Sigmoid colon (tissue), 7 donors: ENCODE measurements at regions of chr9 and their contacts with region 1.

Region 1: DNA sequence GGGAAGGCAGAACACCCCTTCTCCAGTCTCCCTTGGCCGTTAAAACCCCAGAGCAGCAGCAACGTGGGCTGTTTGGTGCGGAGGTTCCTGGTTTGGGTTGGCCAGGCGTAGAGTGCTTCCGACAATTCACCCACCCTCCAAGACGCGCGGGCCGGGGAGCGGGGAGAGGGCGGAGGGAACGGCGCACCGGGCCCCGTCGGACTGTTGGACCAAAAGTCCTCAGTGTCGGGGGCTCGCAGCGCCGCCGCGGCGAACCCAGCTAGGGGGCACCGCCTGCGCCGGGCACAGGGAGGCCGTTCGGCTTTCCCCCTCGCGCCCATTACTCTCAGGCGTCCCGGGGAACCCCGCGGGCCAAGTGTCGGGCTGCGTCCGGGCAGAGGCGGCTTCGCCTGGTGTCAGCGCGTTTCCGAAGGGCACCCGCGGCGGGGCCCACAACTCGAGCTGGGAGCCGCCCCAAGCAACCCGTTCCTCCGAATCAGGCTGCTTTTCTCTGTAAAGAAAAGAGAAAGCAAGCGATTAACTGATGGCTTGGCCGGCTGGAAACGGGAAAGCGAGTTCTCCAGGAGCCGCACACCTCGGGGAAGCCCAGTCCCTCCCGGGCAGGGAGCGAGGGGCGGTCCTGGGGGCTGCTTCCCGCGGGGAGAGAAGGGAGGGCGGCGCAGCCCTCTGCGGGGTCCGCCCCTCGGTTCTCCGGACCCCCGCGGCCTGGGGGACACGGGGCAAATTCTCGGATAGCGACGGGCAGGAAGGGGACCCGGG is 145.5 kb downstream of the ERCC6L2 start:
- DNase-seq: no peak
- H3K4me3 ChIP-seq: peak overlapping the region; percentile 47 to 59 (median 54)
- H3K27ac ChIP-seq: peak overlapping the region; percentile 49 to 79 (median 61)
- H3K4me1 ChIP-seq: peaks cover 0 to 27% (median 24%) of the 10 kb centered on the region in 4 donors
- H3K27me3 ChIP-seq: peaks cover 9 to 45% (median 23%) of the 10 kb centered on the region in 3 donors
- CTCF ChIP-seq: no peak
- EP300 ChIP-seq: no peak
- POLR2A ChIP-seq: no peak

Region 2: DNA sequence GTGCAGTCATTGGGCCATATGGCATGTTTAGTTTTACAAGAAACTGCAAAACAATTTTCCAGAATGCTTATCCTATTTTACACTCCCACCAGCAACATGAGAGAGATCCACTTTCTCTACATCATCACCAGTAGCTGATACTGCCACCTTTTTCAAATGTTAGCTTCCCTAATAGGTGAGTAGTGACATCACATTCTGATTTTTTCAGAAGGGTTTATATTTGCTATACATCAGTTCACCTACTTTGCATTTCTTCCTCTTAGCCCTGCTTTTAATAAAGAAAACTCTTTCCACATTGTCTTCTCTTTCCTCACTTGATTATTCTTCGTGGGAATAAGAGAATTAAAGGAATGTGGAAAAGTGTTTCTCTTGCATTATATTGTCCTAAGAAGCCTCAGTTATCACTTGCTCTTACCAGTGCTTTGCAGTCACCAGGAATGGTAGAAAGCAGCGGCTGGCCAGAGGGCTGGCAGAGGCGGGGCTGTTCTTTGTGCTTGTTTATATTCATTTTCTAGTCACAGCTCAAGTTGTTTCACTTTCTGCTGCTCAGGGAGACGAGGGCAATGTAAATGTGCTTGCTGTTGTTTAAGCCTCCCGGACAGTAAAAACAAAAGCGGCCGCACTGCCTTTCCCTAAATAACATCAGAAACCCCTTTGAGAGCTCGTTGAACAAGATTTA is 116.2 kb after region 1 on chr9:
- intact Hi-C with region 1: loop called (anchors 5 kb)
- DNase-seq: peak; percentile 87
- H3K4me3 ChIP-seq: peak overlapping the region in 3 of 4 donors; percentile 24 to 32 (median 29)
- H3K27ac ChIP-seq: peak overlapping the region; percentile 79 to 85 (median 80)
- H3K4me1 ChIP-seq: peaks cover 0 to 60% (median 55%) of the 10 kb centered on the region in 4 donors
- H3K27me3 ChIP-seq: no peaks in the 10 kb centered on the region
- CTCF ChIP-seq: no peak
- EP300 ChIP-seq: no peak
- POLR2A ChIP-seq: no peak